Ovary (tissue), 10 donors: ENCODE measurements at regions of chr10 and their contacts with region 1.

Region 1: DNA sequence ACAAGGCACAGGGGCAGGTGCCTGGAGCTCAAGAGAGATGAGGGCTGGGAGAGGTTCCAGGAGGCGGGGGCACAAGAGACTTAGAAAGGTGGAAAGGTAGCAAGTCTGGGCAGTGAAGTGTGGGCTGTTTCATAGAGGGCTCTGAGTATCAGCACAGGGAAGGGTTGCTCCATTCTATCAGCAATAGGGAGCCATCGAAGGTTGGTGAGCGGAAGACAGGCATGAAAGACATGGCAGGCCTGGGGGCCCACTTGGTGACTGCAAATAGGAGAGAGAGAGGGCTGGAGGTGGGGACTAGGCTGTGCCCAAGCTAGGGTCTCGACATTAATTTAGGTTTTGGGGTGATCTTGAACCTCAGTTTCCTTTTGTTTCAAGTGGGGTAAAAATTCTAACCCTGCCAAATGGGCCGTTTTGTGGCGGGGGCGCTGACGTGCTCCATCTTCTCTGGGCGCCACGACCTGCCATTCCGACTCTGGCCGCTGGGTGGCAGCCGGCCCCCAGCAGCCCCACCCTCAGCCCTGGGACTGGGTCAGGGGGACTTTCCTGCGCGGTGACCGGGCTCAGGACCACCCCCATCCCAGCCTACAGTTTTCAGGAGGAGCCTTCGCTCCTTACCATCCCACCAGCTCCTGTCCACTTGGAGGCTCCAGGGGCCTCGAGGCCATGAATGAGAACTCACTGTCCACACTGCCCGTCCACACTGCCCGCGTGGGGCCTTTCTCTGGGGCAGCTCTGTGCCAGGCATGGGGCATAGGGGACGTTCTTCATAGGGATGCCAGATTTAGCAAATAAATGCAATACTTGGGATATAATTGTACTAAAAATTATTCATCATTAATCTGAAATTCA is 37.2 kb upstream of the PCBD1 start:
- DNase-seq: peak in 4 of 5 donors; percentile 43 to 72 (median 56)
- H3K4me3 ChIP-seq: no peak overlapping the region
- H3K27ac ChIP-seq: no peak overlapping the region
- H3K4me1 ChIP-seq: no peaks in the 10 kb centered on the region
- H3K27me3 ChIP-seq: no peaks in the 10 kb centered on the region
- CTCF ChIP-seq: peak; percentile 63 to 83 (median 76)
- EP300 ChIP-seq: no peak
- POLR2A ChIP-seq: no peak

Region 2: DNA sequence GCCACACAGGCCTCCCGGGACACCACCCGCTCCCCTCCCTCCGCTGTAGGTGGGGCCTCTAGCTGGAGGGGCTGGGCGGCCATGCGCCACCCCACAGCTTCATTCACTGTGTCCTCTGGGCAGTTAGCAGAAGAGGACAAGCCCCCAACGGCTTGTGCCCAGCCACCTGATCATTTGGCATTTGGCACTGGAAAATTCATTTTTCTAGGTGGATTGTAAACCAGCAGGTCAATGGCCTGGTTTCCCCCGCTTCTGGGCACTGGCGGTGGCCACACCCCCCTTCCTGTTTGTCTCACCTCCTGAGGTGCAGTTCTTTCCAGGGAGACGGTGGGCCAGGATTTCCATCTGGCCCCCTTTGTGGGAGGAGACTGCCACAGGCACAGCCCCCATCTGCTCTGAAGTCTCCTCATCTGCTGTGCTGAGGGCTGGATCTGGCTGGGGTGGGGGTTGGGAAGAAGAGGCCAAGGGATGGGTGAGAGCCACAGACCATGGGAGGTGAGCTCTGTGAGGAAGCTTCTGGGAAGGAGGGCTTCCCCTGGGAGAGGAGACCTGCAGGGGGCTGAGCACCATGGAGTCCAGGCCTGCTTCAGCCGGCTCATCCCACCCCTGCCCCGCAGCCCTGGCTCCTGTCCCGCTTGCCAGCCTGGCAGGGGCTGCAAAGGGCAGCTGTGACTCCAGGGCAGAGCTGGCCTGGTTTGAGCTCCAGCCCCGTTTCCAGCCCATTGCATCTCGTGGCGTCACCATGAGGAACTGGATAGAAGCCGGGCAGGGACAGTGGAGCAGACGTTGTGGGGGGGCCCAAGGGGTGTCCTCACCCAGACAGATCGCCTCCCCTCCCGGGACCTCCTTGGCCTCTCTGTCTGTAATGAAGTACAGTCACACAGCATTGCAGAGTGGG is 353.3 kb after region 1 on chr10:
- intact Hi-C with region 1: loop called (anchors 2 to 10 kb)
- DNase-seq: no peak
- H3K4me3 ChIP-seq: no peak overlapping the region
- H3K27ac ChIP-seq: no peak overlapping the region
- H3K4me1 ChIP-seq: no peaks in the 10 kb centered on the region
- H3K27me3 ChIP-seq: no peaks in the 10 kb centered on the region
- CTCF ChIP-seq: no peak
- EP300 ChIP-seq: no peak
- POLR2A ChIP-seq: no peak

Region 3: GRCh38 chr10:71285180-71285545 is 359.6 kb after region 1 on chr10:
- intact Hi-C with region 1: loop called (anchors 2 to 10 kb)
- DNase-seq: peak; percentile 54 to 78 (median 69)
- H3K4me3 ChIP-seq: no peak overlapping the region
- H3K27ac ChIP-seq: no peak overlapping the region
- H3K4me1 ChIP-seq: no peaks in the 10 kb centered on the region
- H3K27me3 ChIP-seq: no peaks in the 10 kb centered on the region
- CTCF ChIP-seq: peak; percentile 50 to 81 (median 70)
- EP300 ChIP-seq: no peak
- POLR2A ChIP-seq: no peak